ENCODE measurements at regions of chr6 and their contacts with region 1.

Region 1: DNA sequence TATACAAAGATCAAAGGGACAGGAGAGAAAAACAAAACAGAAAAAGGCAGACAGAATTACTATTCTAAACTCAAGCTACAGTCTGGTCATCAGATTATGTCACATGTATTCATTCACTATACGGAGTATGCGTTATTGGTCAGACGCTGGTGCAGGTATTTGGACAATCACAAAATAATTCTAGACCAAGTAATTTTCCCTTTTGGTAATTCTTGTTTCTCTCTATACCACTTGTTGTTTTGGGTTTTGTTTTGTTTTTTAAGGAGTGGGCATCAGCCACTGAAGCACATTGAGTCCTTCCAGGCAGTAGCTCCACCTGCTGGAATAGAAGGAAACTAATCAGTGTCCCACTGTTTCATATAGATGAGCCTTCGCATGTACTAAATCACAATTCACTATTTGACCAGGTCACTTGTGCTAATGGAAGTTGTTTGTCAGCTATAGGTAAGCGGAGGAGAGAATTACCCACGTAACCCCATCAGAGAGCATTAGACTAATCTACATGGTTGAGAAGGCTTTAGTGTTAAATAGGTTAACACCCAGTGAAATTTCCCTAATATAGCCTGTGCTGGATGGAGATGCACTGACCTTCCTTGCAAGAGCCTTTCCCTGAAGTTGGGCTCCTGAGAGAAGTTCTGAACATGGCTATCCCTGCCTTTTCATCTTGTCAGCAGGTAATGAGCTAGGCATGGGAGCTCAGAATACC is 77.9 kb downstream of the TNFAIP3 start:
- DNase-seq: no peak
- ATAC-seq: peak; percentile 89 to 93
- H3K4me3 ChIP-seq: no peak overlapping the region
- H3K27ac ChIP-seq: no peak overlapping the region
- H3K4me1 ChIP-seq: no peaks in the 10 kb centered on the region
- H3K27me3 ChIP-seq: no peaks in the 10 kb centered on the region
- CTCF ChIP-seq: peak; percentile 47 to 79 (median 69)
- POLR2A ChIP-seq: no peak

Region 2: DNA sequence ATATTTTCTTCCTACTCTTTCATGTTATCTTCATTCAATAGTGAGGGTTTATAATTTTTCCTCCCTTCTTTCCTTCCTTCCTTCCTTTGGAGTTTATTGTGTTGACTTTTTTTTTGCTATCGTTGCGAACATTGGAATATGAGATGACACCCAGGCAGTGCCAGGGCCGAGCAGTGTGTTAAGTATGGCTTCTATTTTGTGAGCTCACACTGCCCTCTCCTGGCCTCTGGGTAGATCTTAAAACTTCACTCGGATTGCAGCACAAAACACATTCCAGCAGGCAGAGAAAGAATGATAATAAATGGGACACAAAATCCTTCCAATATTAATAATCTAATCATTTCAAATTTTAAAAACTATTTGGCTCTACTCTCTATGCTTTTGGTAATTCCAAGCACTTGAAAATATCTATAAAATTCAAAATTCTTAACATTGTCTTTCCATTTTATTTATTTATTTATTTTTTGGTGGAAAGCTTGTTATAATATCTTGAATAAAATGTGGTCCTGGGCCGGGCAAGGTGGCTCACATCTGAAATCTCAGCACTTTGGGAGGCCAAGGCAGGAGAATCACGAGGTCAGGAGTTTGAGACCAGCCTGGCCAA is 303.4 kb before region 1 on chr6:
- in situ Hi-C with region 1: no loop called
- intact Hi-C with region 1: no loop called
- DNase-seq: peak; percentile 55 to 56
- ATAC-seq: peak; percentile 88 to 90
- H3K4me3 ChIP-seq: no peak overlapping the region
- H3K27ac ChIP-seq: no peak overlapping the region
- H3K4me1 ChIP-seq: peaks cover 0 to 3% of the 10 kb centered on the region in 2 donors
- H3K27me3 ChIP-seq: no peaks in the 10 kb centered on the region
- CTCF ChIP-seq: peak; percentile 48 to 70 (median 61)
- POLR2A ChIP-seq: no peak

Region 3: DNA sequence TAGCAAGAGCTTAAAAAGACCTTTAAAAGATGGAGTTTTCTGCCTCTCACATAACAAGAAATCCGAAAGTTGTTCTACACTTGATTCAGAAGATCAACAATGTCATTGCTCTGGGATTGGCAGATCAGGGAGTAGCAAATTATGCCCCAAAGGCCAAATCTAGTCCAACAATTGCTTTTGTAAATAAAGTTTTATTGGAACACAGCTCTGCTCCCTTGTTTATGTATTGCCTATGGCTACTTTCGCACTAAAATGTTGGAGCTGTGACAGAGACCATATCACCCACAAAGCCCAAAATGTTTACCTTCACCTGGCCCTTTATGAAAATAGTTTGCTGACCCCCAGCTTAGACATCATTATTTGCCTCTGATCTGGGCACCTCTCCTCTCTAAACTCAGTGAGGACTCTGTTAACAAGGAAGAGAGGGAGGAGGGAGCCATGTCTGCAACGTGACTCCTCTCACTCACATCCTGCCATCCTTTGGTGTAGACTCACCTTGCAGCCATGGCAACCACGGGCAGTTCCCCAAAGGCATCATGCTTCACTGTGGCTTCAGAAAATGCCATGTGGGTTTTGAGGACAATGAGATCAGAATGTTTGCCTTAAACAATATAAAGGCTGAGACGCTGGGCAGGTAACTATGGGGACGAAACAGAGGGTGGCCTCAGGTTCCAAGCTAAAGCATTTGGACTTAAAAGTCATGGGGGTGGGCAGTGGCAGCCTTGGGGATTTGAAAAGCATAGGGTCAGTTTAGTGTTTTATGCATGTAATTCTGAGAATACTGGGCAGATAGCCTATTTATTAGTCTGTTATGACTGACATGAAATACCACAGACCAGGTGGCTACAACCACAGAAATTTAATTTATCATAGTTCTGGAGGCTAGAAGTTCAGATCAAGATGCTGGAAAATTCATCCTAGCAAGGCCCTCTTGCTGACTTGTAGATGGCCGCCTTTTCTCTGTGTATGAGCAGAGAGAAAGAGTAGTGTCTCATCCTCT is 227.6 kb before region 1 on chr6:
- in situ Hi-C with region 1: loop called in 3 of 4 experiments (anchors 5 to 10 kb)
- intact Hi-C with region 1: no loop called
- DNase-seq: no peak
- ATAC-seq: no peak
- H3K4me3 ChIP-seq: no peak overlapping the region
- H3K27ac ChIP-seq: no peak overlapping the region
- H3K4me1 ChIP-seq: peaks cover 6 to 7% of the 10 kb centered on the region in 2 donors
- H3K27me3 ChIP-seq: no peaks in the 10 kb centered on the region
- CTCF ChIP-seq: no peak
- POLR2A ChIP-seq: no peak

Region 4: DNA sequence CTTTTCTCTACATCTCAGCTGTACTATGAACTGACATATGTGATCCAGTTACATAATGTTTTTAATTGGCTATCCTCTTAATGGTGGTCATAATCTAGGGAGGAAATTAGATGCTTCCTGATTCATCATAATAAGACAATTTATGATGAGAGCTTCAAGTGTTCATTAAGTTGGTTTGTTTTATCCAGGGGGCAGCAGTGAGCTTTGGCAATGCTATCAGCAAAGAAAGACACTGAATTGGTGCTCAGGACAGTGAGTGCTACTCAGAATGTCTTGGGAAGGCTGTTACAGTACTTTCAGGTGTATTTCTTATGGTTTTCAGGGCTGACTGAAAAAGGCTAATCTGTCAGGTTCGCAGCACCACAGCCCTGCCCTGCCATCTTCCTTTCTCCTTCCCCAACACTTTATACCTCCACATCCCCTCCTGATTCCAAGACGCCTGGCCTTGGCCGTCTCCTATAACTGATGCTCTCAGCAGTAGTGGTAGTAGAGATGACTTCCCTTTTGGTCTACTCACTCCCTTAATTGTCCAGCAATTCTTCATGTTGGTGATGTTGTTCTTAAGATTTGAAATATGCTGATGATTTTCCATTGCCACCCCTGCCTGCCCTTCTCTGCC is 144.9 kb before region 1 on chr6:
- in situ Hi-C with region 1: no loop called
- intact Hi-C with region 1: loop called (anchors 10 kb)
- DNase-seq: no peak
- ATAC-seq: peak; percentile 39 to 42
- H3K4me3 ChIP-seq: no peak overlapping the region
- H3K27ac ChIP-seq: no peak overlapping the region
- H3K4me1 ChIP-seq: no peaks in the 10 kb centered on the region
- H3K27me3 ChIP-seq: no peaks in the 10 kb centered on the region
- CTCF ChIP-seq: peak in 3 of 5 experiments; percentile 21 to 45 (median 34)
- POLR2A ChIP-seq: no peak

Region 5: DNA sequence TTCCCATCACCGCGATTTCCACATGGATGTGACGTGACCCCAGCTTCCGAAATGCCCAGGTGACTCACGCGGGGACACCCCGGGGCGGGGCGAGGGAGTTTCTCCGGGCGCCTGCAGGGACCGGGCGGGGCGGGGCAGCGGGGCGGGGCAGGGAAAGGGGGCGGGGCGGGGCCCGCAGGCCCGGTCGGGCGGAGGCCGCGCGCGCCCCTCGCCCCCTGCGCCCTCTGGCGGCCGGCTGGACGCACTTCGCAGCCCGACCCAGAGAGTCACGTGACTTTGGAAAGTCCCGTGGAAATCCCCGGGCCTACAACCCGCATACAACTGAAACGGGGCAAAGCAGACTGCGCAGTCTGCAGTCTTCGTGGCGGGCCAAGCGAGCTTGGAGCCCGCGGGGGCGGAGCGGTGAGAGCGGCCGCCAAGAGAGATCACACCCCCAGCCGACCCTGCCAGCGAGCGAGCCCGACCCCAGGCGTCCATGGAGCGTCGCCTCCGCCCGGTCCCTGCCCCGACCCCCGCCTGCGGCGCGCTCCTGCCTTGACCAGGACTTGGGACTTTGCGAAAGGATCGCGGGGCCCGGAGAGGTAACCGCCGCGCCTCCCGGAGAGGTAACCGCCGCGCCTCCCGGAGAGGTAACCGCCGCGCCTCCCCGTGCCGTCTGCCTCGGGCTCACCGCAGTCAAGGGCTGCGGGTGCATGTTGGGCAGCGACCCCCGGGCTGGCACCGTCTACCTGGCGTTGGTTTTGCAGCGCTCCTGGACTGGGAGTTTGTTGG is 77.8 kb before region 1 on chr6 and contains the start of gene TNFAIP3:
- in situ Hi-C with region 1: loop called in 2 of 4 experiments (anchors 5 to 10 kb)
- intact Hi-C with region 1: loop called (anchors 5 kb)
- DNase-seq: peak; percentile 86 to 91
- ATAC-seq: peak; percentile 89 to 90
- H3K4me3 ChIP-seq: peak within 1 kb of the TSS; percentile 67 to 96 (median 86)
- H3K27ac ChIP-seq: peak within 1 kb of the TSS; percentile 85 to 88 (median 86)
- H3K4me1 ChIP-seq: peaks cover 20 to 36% of the 10 kb centered on the region in 2 donors
- H3K27me3 ChIP-seq: no peaks in the 10 kb centered on the region
- CTCF ChIP-seq: peak; percentile 71 to 97 (median 92)
- POLR2A ChIP-seq: peak; percentile 51 to 79
- total RNA-seq, gene TNFAIP3: 2.6 to 7.1 (median 4.7) TPM

Region 6: GRCh38 chr6:137873273-137873762 is 71.6 kb before region 1 on chr6:
- in situ Hi-C with region 1: loop called in 2 of 4 experiments (anchors 5 to 10 kb)
- intact Hi-C with region 1: loop called (anchors 5 kb)
- DNase-seq: peak; percentile 69 to 81
- ATAC-seq: peak; percentile 93
- H3K4me3 ChIP-seq: peak overlapping the region in 2 of 4 donors; percentile 7 to 19
- H3K27ac ChIP-seq: peak overlapping the region; percentile 13 to 65 (median 35)
- H3K4me1 ChIP-seq: peaks cover 27 to 48% of the 10 kb centered on the region in 2 donors
- H3K27me3 ChIP-seq: no peaks in the 10 kb centered on the region
- CTCF ChIP-seq: no peak
- POLR2A ChIP-seq: peak in 1 of 2 donors; percentile 34

Region 7: DNA sequence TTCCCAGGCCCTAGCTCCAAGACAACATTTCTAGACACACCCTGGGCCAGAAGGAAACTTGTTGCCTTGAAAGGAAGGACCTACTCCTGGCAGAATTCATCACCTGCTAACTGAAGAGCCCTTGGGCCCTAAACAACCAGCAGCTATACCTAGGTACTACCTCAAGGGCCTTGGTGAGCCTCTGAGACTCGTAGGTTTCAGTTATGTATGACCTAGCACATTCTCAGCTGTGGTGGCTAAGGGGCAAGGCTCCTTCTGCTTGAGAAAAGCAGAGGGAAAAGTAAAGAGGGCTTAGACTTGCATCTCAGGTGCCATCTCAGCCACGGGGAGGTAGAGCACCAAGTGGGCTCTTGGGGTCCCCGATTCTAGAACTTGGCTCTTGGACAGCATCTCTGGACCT is 686.6 kb after region 1 on chr6:
- in situ Hi-C with region 1: no loop called
- intact Hi-C with region 1: no loop called
- DNase-seq: no peak
- ATAC-seq: no peak
- H3K4me3 ChIP-seq: no peak overlapping the region
- H3K27ac ChIP-seq: no peak overlapping the region
- H3K4me1 ChIP-seq: no peaks in the 10 kb centered on the region
- H3K27me3 ChIP-seq: no peaks in the 10 kb centered on the region
- CTCF ChIP-seq: no peak
- POLR2A ChIP-seq: no peak

Measured in gastrocnemius medialis (tissue), 4 donors.